ENCODE measurements at regions of chr9 and their contacts with region 1.

Region 1: GRCh38 chr9:78296893-78297671 is at the start of gene PSAT1:
- DNase-seq: peak; percentile 94 to 96
- H3K4me3 ChIP-seq: peak within 1 kb of the TSS; percentile 63
- H3K27ac ChIP-seq: peak within 1 kb of the TSS; percentile 97
- H3K4me1 ChIP-seq: peaks cover 22% of the 10 kb centered on the region
- H3K27me3 ChIP-seq: no peaks in the 10 kb centered on the region
- CTCF ChIP-seq: no peak
- total RNA-seq, gene PSAT1: 238 and 315 TPM in 2 replicates

Region 2: GRCh38 chr9:77085423-77085822 is 1211.7 kb before region 1 on chr9:
- CTCF ChIA-PET with region 1: no interaction called
- POLR2A ChIA-PET with region 1: no interaction called
- intact Hi-C with region 1: no loop called
- DNase-seq: no peak
- H3K4me3 ChIP-seq: no peak overlapping the region
- H3K27ac ChIP-seq: no peak overlapping the region
- H3K4me1 ChIP-seq: no peaks in the 10 kb centered on the region
- H3K27me3 ChIP-seq: peaks cover 57% of the 10 kb centered on the region
- CTCF ChIP-seq: no peak

Region 3: GRCh38 chr9:77177161-77177893 is 1119.8 kb before region 1 on chr9 and contains the start of gene VPS13A:
- CTCF ChIA-PET with region 1: no interaction called
- POLR2A ChIA-PET with region 1: no interaction called
- intact Hi-C with region 1: loop called (anchors 5 kb)
- DNase-seq: peak; percentile 84 to 97
- H3K4me3 ChIP-seq: peak within 1 kb of the TSS; percentile 76
- H3K27ac ChIP-seq: peak within 1 kb of the TSS; percentile 44
- H3K4me1 ChIP-seq: peaks cover 31% of the 10 kb centered on the region
- H3K27me3 ChIP-seq: no peaks in the 10 kb centered on the region
- CTCF ChIP-seq: no peak; the same call in 1 of the 2 replicates
- total RNA-seq, gene VPS13A: 37.4 and 53.9 TPM in 2 replicates

Region 4: DNA sequence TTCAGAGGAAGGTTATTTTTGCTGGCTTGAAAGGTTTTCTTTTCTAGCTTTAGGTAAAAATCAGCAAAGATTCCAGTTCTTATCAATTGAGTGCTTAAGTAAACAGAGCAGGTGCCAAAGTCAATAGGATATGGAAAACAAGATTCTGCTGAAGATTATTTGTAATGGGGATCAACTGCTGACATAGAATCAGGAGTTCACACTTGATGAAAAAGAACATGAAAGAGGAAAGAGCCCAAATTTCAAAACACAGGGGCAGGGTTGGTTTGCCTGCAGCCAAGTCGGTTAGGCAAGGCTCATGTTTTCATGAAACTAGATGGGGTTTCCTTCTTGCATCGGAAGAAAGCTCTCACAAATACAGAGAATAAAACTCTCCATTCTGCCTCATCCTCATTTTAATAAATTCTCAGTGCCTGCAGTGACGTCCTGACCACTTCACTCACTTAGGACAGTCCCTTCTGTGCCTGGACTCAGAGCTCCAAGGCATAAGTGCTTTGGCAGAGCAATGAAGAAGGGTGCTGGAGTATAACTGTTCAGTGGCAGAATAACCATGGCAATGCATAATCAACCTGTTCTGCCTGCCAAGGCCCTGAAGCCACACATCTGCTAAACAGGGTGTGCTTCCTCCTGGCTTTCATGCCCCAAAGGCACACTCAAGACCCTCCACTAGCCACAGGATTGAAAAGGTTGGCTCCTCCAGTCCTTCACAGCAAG is 445.0 kb before region 1 on chr9:
- CTCF ChIA-PET with region 1: no interaction called
- POLR2A ChIA-PET with region 1: no interaction called
- intact Hi-C with region 1: no loop called
- DNase-seq: peak in 1 of 2 experiments; percentile 68
- H3K4me3 ChIP-seq: no peak overlapping the region
- H3K27ac ChIP-seq: no peak overlapping the region
- H3K4me1 ChIP-seq: peaks cover 25% of the 10 kb centered on the region
- H3K27me3 ChIP-seq: no peaks in the 10 kb centered on the region
- CTCF ChIP-seq: no peak

Region 5: GRCh38 chr9:78132701-78133058 is 164.4 kb before region 1 on chr9:
- CTCF ChIA-PET with region 1: no interaction called
- POLR2A ChIA-PET with region 1: no interaction called
- intact Hi-C with region 1: no loop called
- DNase-seq: no peak
- H3K4me3 ChIP-seq: peak overlapping the region; percentile 9; the same call in 1 of the 2 replicates
- H3K27ac ChIP-seq: no peak overlapping the region
- H3K4me1 ChIP-seq: 0 out of 2 replicates have a peak, but pooled peaks cover 4% of the 10 kb centered on the region
- H3K27me3 ChIP-seq: no peaks in the 10 kb centered on the region
- CTCF ChIP-seq: no peak

Region 6: DNA sequence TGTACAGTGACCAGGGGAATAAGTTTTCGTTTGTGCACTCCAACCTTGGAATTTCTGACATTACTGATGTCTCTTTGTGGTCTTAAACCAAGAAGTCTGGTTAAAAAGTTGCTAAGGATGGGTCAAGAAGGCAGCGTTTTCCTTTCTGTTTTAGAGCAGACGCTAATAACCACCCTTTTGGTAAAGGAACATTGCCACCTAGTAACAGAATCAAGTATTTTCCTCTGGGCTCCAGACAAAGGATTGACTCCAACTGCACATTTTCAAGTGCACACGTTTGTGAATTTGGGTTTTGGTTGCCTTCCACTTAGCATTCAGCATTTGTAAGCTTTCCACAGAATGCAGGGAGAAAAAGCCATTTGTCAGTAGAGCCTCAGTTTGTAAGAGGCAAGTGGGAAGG is 83.4 kb before region 1 on chr9:
- CTCF ChIA-PET with region 1: interaction called, 11 read pairs
- POLR2A ChIA-PET with region 1: interaction called, 10 read pairs
- intact Hi-C with region 1: no loop called
- DNase-seq: no peak
- H3K4me3 ChIP-seq: no peak overlapping the region
- H3K27ac ChIP-seq: no peak overlapping the region
- H3K4me1 ChIP-seq: no peaks in the 10 kb centered on the region
- H3K27me3 ChIP-seq: no peaks in the 10 kb centered on the region
- CTCF ChIP-seq: no peak; the same call in 1 of the 2 replicates

Region 7: DNA sequence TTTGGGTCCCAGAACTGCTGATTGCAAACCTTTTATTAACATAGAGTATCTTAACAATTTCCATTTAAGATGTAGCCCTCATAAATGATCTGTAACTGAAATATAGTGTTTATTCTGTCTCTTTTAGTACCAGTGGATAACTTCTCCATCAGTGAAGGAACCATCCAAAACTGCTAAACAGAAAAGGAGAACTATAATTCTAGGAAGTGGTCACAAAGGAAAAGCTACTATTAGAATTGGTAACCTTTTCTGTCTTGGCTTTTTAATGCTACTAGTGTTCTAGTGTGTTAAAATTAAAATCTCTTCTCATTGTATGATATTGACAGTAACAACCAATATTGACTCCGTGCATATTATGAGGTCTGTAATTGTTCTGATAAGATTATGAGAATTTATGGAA is 48.4 kb before region 1 on chr9:
- CTCF ChIA-PET with region 1: no interaction called
- POLR2A ChIA-PET with region 1: interaction called, 29 read pairs
- intact Hi-C with region 1: no loop called
- DNase-seq: no peak
- H3K4me3 ChIP-seq: no peak overlapping the region
- H3K27ac ChIP-seq: no peak overlapping the region
- H3K4me1 ChIP-seq: no peaks in the 10 kb centered on the region
- H3K27me3 ChIP-seq: no peaks in the 10 kb centered on the region
- CTCF ChIP-seq: no peak